AG04450 (cell line): ENCODE measurements at regions of chr17 and their contacts with region 1.

Region 1: GRCh38 chr17:30104575-30105339 is 11.9 kb upstream of the NSRP1 start:
- DNase-seq: peak; percentile 41
- H3K4me3 ChIP-seq: peak overlapping the region; percentile 63
- H3K27ac ChIP-seq: no peak overlapping the region
- H3K27me3 ChIP-seq: peaks cover 3% of the 10 kb centered on the region
- CTCF ChIP-seq: peak; percentile 94

Region 2: DNA sequence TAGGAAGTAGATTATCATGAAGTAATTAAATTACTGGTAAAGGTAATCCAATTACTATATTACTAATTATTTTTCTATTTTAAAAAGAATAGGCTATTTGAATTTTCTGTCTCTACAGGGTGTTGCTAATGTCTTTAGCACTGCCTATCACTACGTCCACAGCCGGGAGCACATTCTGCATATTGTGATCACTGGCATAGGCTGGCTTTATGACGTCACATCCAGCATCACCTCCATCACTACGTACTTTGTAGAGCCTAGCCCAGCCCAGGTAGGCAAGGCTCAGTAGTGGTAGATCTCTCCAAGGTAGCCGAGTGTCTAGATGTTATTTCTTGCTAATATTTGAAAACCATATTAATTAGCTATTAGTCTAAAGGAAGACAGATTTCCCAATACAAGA is 22.0 kb before region 1 on chr17:
- CTCF ChIA-PET with region 1: no interaction called
- POLR2A ChIA-PET with region 1: no interaction called
- DNase-seq: no peak
- H3K4me3 ChIP-seq: no peak overlapping the region
- H3K27ac ChIP-seq: no peak overlapping the region
- H3K27me3 ChIP-seq: peaks cover 23% of the 10 kb centered on the region
- CTCF ChIP-seq: no peak

Region 3: DNA sequence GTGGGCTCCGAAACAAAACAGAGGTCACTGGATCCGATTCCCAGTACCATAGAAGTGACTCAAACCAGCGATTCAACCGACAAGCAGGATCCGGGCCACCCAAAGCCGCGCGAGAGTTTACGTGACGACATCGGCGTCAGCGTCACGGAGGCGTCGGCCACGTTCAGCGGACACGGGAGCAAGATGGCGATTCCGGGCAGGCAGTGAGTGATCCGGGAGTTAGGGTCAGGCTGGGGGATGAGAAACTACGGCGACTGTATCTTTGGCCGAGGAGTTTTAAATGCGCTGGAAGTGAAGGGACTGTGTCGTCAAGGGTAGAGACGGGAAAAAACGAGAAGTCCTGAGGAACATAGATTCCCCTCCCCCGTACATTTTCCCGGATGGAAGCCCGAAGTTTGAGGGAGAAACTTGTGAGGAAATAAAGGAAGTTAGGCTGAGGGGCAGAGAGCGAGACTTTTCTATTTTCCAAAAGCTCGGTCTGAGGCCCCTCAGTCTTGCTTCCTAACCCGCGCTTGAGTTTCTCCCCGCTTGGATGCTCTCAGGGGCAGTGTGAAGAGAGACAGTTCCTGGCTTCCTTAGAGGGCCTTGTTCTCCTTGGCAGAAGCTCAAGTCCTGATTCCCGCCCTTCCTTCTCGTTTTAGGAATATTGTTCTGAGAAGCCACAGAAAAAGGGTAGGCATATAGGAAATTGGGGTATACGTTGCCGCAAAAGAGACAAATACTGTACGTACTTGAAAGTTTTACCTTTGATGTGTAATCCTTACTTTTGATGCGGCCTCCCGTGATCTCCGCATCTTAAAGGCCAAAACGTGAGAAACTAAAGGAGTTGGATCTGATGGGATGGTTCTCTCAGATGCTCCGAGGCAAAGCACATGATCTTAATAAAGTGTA is 12.1 kb after region 1 on chr17 and contains the start of gene NSRP1:
- CTCF ChIA-PET with region 1: interaction called, 75 read pairs
- POLR2A ChIA-PET with region 1: interaction called, 4 read pairs
- DNase-seq: peak; percentile 83
- H3K4me3 ChIP-seq: peak within 1 kb of the TSS; percentile 87
- H3K27ac ChIP-seq: peak within 1 kb of the TSS; percentile 97
- H3K27me3 ChIP-seq: no peaks in the 10 kb centered on the region
- CTCF ChIP-seq: no peak
- polyA plus RNA-seq, gene NSRP1: 14.8 and 18.6 TPM in 2 replicates

Region 4: GRCh38 chr17:30124273-30124796 is 19.6 kb after region 1 on chr17:
- CTCF ChIA-PET with region 1: interaction called, 38 read pairs
- POLR2A ChIA-PET with region 1: no interaction called
- DNase-seq: no peak
- H3K4me3 ChIP-seq: no peak overlapping the region
- H3K27ac ChIP-seq: no peak overlapping the region
- H3K27me3 ChIP-seq: no peaks in the 10 kb centered on the region
- CTCF ChIP-seq: no peak

Region 5: GRCh38 chr17:30236766-30237165 is 132.0 kb after region 1 on chr17:
- CTCF ChIA-PET with region 1: interaction called, 15 read pairs
- POLR2A ChIA-PET with region 1: no interaction called
- DNase-seq: no peak
- H3K4me3 ChIP-seq: no peak overlapping the region
- H3K27ac ChIP-seq: no peak overlapping the region
- H3K27me3 ChIP-seq: peaks cover 70% of the 10 kb centered on the region
- CTCF ChIP-seq: peak; percentile 29; the same call in 1 of the 2 replicates

Region 6: DNA sequence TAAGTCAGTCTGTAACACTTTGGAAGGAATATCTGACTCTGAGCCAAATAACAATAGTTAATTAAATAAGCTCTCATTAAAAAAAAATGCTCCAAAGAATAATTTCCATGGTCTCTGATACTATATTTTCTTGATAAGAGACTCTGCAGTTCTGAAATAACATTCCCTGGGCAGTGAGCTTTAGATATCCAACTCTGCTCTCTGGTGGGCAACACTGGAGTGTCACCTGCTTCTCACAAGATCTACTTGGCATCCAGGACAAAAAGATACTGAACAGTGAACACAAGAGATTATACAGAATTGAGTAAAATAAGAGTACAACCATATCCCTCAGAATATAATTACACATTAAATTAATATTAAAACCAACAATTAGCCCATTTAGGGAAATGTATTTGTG is 173.3 kb after region 1 on chr17:
- CTCF ChIA-PET with region 1: interaction called, 31 read pairs
- POLR2A ChIA-PET with region 1: no interaction called
- DNase-seq: no peak
- H3K4me3 ChIP-seq: no peak overlapping the region
- H3K27ac ChIP-seq: no peak overlapping the region
- H3K27me3 ChIP-seq: no peaks in the 10 kb centered on the region
- CTCF ChIP-seq: peak; percentile 56

Region 7: DNA sequence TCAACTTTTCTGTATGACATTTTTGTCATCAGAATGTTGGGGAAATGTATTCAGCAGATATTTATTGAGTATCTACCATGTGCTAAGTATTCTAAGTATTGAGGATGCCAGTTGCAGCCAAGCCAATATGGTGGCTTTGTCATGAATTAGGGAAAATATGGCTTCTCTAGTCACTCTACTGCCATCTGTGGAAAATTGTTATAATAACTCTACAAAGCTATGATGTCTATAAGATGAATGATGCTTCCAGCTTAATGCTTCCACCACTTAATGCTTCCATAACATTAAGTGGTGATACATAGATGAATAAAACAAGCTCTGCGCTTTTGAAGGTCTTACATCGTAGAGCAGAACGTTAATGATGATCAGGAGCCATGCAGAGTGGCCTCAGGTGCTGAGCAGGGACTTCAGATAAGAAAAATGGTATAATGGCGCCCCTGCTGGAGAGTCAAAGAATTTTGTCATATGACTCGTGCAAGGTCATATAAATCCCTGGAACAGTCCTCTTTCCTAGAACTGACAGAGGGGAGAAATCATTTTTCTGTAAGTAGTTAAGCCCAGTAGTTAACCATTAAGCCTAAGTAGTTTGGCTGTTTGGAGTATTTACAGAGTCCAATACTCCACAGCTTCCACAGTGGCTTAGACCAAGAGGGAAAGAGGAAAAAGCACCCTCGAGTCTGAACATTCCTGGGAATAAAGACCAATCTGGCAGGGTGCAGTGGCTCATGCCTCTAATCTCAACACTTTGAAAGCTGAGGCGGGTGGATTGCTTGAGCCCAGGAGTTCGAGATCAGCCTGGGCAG is 231.8 kb after region 1 on chr17:
- CTCF ChIA-PET with region 1: interaction called, 12 read pairs
- POLR2A ChIA-PET with region 1: no interaction called
- DNase-seq: no peak
- H3K4me3 ChIP-seq: no peak overlapping the region
- H3K27ac ChIP-seq: no peak overlapping the region
- H3K27me3 ChIP-seq: no peaks in the 10 kb centered on the region
- CTCF ChIP-seq: peak; percentile 53

Region 8: GRCh38 chr17:30921544-30922196 is 816.9 kb after region 1 on chr17 and contains the start of gene ADAP2:
- CTCF ChIA-PET with region 1: no interaction called
- POLR2A ChIA-PET with region 1: no interaction called
- DNase-seq: no peak
- H3K4me3 ChIP-seq: peak within 1 kb of the TSS; percentile 36; the same call in 1 of the 2 replicates
- H3K27ac ChIP-seq: no peak within 1 kb of the TSS
- H3K27me3 ChIP-seq: peaks cover 17% of the 10 kb centered on the region
- CTCF ChIP-seq: no peak
- polyA plus RNA-seq, gene ADAP2: 1.4 and 1.7 TPM in 2 replicates